ENCODE measurements at regions of chr5 and their contacts with region 1.

Region 1: GRCh38 chr5:10627160-10627701 is 63.4 kb downstream of the ANKRD33B start:
- DNase-seq: peak; percentile 56
- CTCF ChIP-seq: no peak

Region 2: GRCh38 chr5:10393491-10393890 is 233.7 kb before region 1 on chr5:
- CTCF ChIA-PET with region 1: no interaction called
- POLR2A ChIA-PET with region 1: no interaction called
- DNase-seq: no peak
- CTCF ChIP-seq: no peak

Region 3: DNA sequence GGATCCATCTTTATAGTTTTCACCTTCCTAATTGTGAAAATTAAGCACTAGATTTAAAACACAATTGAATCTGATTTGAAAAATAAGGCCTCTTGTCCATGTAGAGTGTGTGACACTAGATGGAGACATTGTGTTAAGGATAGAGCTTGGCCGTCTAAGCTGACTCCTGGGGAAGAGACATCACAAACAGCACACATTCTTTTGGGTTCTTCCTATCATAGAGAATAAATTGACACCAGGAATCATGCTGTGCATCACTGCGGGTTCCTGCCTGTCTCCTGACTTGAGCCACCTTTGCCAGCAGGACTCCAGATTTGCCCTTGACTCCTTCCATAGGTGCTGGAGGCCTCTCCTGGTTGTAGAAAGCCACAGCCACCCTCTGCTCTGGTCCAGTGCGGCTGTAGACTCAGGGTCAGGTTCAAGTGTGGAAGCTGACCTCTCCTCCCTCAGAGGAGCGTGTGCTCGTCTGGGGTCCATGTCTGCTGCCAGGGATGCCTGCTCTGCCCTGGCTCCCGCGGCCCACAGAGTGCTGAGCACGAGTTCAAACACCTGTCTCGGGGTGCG is 174.4 kb before region 1 on chr5:
- CTCF ChIA-PET with region 1: interaction called, 119 read pairs
- POLR2A ChIA-PET with region 1: no interaction called
- DNase-seq: peak; percentile 82
- CTCF ChIP-seq: peak; percentile 78

Region 4: GRCh38 chr5:10577371-10578292 is 49.6 kb before region 1 on chr5:
- CTCF ChIA-PET with region 1: interaction called, 29 read pairs
- POLR2A ChIA-PET with region 1: interaction called, 4 read pairs
- DNase-seq: no peak
- CTCF ChIP-seq: no peak

Region 5: GRCh38 chr5:10595678-10596309 is 31.4 kb before region 1 on chr5:
- CTCF ChIA-PET with region 1: interaction called, 148 read pairs
- POLR2A ChIA-PET with region 1: interaction called, 4 read pairs
- DNase-seq: no peak
- CTCF ChIP-seq: no peak

Region 6: DNA sequence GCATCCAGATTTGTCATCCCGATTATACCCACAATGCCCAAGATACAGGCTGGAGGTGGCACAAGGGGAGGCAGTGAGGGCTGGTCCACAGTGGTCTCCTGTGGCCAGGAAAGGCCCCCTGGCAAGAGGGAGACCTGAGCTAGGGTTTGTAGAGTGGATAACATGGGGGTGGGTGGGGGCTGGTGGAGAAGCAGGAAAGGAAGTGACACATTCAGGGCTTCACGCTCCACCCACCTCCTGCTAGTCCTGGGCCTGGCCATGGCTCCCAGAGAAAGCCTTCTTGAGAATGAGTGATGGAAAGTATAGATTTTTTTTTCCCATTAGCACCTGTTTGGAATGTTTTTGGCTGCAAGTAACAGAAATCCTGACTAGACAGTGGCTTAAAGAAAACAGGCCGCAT is 17.9 kb after region 1 on chr5:
- CTCF ChIA-PET with region 1: interaction called, 10 read pairs
- POLR2A ChIA-PET with region 1: no interaction called
- DNase-seq: no peak
- CTCF ChIP-seq: no peak

Region 7: DNA sequence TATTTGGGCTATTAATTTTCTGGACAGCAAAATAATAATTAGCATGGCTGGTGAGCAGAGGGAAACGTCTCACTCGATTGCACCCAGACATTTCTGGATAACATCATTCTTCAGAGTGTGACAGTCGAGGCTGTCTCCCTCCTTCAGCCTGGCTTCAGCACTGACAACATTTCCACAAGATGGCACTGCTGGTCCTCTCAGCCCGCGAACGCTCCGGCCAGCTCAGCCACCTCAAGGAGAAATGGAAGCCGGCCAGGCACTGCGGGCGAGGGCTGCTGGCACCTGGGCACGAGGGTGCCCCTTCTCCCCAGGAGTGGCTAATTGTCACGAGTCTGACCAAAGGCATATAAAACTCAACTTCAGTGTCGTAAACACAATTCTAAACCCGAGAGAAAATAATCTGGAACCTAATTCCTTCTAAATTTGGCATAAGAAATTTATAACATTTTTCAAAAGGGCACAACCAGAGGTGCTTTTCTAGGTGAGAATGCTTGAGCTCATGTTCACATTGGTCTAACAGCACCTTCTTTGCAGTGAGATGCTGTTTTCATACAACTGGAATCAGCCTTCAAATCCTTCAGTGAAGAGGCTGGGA is 67.9 kb after region 1 on chr5:
- CTCF ChIA-PET with region 1: interaction called, 14 read pairs
- POLR2A ChIA-PET with region 1: no interaction called
- DNase-seq: peak; percentile 69
- CTCF ChIP-seq: peak; percentile 87